Dorsolateral prefrontal cortex (tissue), 120 donors: ENCODE measurements at regions of chr22 and their contacts with region 1.

Region 1: GRCh38 chr22:39520054-39520891 is at the start of gene ATF4:
- DNase-seq: peak; percentile 87 to 96 (median 94)
- H3K4me3 ChIP-seq: peak within 1 kb of the TSS; percentile 68 to 100 (median 99)
- H3K27ac ChIP-seq: peak within 1 kb of the TSS; percentile 91 to 100 (median 99)
- H3K27me3 ChIP-seq: no peaks in the 10 kb centered on the region
- CTCF ChIP-seq: peak in 2 of 56 donors; percentile 34 to 44
- total RNA-seq, gene ATF4: 110 to 287 (median 161) TPM

Region 2: DNA sequence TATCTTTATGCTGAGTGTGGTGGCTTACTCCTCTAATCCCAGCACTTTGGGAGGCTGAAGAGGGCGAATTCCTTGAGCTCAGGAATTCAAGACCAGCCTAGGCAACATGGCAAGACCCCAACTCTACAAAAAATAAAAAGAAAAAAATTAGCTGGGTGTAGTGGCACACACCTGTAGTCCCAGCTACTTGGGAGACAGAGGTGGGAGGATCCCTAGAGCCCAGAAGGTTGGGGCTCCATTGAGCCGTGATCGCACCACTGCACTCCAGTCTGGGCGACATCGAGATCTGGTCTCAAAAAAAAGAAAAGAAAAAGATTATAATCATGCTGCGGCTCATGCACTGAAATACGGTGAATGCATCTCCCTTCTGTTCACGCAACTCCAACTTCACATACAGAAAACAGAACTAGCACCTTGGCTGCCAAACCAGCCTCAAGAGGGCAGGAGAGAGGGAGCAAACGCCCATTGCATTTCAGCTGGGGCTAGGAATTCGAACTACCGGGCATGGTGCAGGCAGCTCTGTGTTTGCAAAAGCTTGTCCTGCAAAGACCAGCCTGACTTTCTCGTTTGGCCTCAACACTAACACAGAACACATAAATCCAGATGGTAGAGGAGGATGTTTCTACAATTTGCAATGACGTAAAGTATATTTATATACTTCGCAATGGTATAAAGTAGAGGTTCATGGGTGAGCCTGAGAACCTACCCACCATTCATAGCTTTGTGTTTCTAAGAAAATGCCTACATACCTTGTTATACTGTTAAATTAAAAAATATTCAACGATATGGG is 176.8 kb before region 1 on chr22:
- intact Hi-C with region 1: loop called (anchors 5 to 10 kb)
- DNase-seq: peak in 8 of 10 donors; percentile 65 to 84 (median 78)
- H3K4me3 ChIP-seq: peak overlapping the region in 26 of 59 donors; percentile 0 to 40 (median 16)
- H3K27ac ChIP-seq: peak overlapping the region in 34 of 59 donors; percentile 2 to 83 (median 52)
- H3K27me3 ChIP-seq: no peaks in the 10 kb centered on the region
- CTCF ChIP-seq: peak; percentile 45 to 80 (median 70)

Region 3: GRCh38 chr22:39364714-39365491 is 155.4 kb before region 1 on chr22:
- intact Hi-C with region 1: no loop called
- DNase-seq: no peak
- H3K4me3 ChIP-seq: peak overlapping the region in 4 of 59 donors; percentile 5 to 9 (median 6)
- H3K27ac ChIP-seq: peak overlapping the region in 58 of 59 donors; percentile 55 to 97 (median 87)
- H3K27me3 ChIP-seq: no peaks in the 10 kb centered on the region
- CTCF ChIP-seq: peak in 1 of 56 donors; percentile 8

Region 4: GRCh38 chr22:39395936-39396796 is 124.1 kb before region 1 on chr22:
- intact Hi-C with region 1: loop called (anchors 5 kb)
- DNase-seq: peak in 1 of 10 donors; percentile 88
- H3K4me3 ChIP-seq: no peak overlapping the region
- H3K27ac ChIP-seq: peak overlapping the region in 2 of 59 donors; percentile 48 to 99
- H3K27me3 ChIP-seq: no peaks in the 10 kb centered on the region
- CTCF ChIP-seq: no peak

Region 5: DNA sequence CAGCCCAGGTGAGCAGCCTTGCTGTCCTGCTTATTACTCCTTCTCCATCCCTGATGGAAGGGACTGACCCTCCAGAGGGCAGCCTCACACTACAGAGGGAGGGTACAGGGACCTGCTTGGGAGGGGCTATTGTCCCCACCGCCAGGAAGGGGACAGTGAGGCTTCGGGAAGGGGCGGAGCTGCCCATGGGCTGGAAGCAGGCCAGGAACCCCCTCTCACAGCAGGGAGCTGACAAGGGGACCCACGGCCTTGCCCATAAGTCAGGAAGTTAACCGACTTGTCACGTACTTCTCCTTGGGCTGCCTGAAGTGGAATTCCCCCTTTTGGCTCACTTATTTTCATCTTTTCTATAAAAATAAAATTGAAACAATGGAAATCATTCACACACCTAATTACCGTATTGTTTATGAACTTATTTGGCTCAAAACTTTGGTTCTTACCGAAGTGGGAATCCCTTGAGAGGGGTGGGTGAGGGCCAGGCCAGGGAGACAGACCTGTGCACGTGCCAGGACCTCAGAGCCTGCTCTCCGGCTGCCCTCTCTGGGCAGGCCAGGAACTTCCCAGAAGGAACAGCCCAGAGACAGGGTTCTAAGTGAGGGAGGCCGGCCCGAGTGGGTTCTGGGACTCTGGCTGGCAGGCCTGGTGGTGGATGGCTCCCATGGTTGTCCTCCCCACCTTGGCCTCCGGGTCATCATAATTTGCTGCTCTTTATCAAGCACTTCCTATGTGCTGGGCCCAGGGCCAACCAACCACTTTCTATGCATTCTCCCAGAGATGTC is 57.6 kb before region 1 on chr22:
- intact Hi-C with region 1: loop called in 1 of 2 experiments (anchors 2 kb)
- DNase-seq: no peak
- H3K4me3 ChIP-seq: no peak overlapping the region
- H3K27ac ChIP-seq: peak overlapping the region; percentile 31 to 100 (median 99)
- H3K27me3 ChIP-seq: no peaks in the 10 kb centered on the region
- CTCF ChIP-seq: peak in 52 of 56 donors; percentile 20 to 74 (median 44)

Region 6: DNA sequence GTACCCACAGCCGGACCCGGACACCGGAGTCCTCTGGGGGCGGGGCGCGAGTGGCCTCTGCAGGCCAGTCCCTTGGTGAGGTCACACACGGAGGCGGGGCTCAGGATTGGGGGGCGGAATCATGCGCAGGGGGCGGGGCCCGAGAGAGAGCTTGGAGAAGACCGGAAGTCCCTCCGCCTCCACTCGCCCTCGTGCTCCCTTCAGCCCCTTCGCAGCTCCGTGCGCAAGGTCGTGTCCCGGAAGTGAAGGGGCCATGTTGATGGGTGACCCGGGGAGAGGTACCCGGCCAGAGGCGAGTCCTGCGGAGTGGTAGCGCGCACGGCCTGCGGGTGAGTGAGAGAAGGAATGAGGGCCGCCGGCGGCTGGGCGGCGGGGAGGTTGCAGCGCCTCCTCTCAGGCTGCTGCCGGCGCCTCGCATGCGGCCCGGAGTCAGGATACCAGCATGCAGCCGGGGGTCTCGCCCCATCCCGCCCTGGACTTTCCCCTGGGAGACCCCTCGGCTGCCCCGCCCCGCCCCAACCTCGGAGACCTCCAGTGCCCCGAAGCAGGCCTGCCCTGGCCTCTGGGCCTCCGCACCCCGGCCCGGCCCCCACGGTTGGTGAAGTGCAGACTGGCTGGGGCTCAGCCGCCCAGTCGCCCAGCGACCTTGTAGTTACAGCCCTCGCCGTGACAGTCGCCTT is 18.0 kb before region 1 on chr22 and contains the start of gene MIEF1:
- intact Hi-C with region 1: loop called (anchors 2 kb)
- DNase-seq: peak; percentile 93 to 98 (median 96)
- H3K4me3 ChIP-seq: peak within 1 kb of the TSS; percentile 69 to 99 (median 95)
- H3K27ac ChIP-seq: peak within 1 kb of the TSS; percentile 87 to 99 (median 96)
- H3K27me3 ChIP-seq: no peaks in the 10 kb centered on the region
- CTCF ChIP-seq: peak in 39 of 56 donors; percentile 4 to 65 (median 36)
- total RNA-seq, gene MIEF1: 21.3 to 40.7 (median 28.0) TPM

Region 7: GRCh38 chr22:39738746-39739145 is 218.5 kb after region 1 on chr22:
- intact Hi-C with region 1: no loop called
- DNase-seq: no peak
- H3K4me3 ChIP-seq: no peak overlapping the region
- H3K27ac ChIP-seq: no peak overlapping the region
- H3K27me3 ChIP-seq: peaks cover 0 to 21% (median 0%) of the 10 kb centered on the region in 45 donors
- CTCF ChIP-seq: no peak

Region 8: DNA sequence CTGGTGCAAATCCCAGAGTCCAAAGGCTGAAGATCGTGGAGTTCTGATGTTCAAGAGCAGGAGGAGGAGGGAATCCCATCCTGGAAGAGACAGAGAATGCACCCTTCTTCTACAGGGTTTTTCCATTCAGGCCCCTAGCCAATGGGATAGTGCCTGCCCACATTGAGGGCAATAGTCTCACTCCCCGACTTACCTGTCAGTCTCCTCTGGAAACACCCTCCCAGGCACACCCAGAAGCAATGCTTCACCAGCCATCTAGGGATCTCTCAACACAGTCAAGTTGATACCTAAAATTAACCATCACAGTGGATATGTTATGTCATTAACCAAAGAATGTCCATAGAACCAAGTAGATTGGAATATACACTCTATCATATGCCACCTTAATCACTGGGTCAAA is 547.4 kb after region 1 on chr22:
- intact Hi-C with region 1: no loop called
- DNase-seq: no peak
- H3K4me3 ChIP-seq: no peak overlapping the region
- H3K27ac ChIP-seq: no peak overlapping the region
- H3K27me3 ChIP-seq: no peaks in the 10 kb centered on the region
- CTCF ChIP-seq: no peak